ENCODE measurements at regions of chr10 and their contacts with region 1.

Region 1: DNA sequence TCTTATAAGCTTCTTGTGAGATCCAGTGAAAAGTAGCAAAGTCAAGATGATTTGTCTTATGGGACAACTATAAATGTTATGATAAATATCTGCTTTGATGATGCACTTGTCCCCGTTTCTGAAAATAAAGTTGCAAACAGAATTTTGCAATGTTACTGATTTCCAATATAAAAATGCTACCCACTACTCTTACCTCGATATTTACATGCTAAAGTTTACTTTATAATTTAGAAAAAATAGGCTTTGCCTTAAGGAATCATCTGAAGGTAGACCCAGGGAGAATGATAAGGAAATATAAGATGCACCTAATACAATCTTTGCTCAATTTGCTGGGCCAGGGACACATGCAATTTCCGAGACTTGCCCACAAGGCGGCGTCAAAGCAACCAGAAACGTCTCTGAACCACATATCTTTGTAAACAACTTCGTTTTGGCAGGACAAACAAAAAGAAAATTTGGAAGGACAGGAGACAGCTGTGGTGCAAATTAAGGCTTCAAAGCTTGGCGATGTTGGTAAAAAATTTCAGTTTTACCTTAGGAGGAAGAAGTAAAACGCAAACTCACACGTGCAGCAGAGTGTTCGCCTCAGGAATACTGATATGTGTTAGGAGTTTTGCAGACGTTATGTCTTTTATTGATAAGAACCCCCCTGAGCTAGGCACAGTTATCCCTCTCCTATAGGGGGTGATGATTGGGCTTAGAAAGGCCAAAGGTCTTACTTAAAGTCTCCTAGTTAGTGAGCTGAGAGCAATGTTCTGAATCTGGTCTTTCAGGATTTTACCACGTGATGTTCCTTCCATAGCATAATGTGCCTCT is 134.4 kb downstream of the PRKCQ start:
- DNase-seq: peak; percentile 41 to 50 (median 46)
- H3K4me3 ChIP-seq: no peak overlapping the region
- H3K4me3 Mint-ChIP-seq: peak overlapping the region in 2 of 8 donors; percentile 3 to 41
- H3K27ac ChIP-seq: no peak overlapping the region
- H3K27ac Mint-ChIP-seq: peak overlapping the region in 6 of 7 donors; percentile 24 to 73 (median 58)
- H3K4me1 ChIP-seq: peaks cover 5% of the 10 kb centered on the region
- H3K4me1 Mint-ChIP-seq: peaks cover 18 to 44% (median 30%) of the 10 kb centered on the region in 4 donors
- H3K27me3 ChIP-seq: no peaks in the 10 kb centered on the region
- H3K27me3 Mint-ChIP-seq: no peaks in the 10 kb centered on the region

Region 2: GRCh38 chr10:6416892-6417512 is 28.7 kb before region 1 on chr10:
- CTCF ChIA-PET with region 1: interaction called, 12 read pairs
- POLR2A ChIA-PET with region 1: no interaction called
- intact Hi-C with region 1: loop called (anchors 2 kb)
- DNase-seq: peak in 4 of 5 donors; percentile 52 to 57 (median 56)
- H3K4me3 ChIP-seq: no peak overlapping the region
- H3K4me3 Mint-ChIP-seq: no peak overlapping the region
- H3K27ac ChIP-seq: no peak overlapping the region
- H3K27ac Mint-ChIP-seq: no peak overlapping the region
- H3K4me1 ChIP-seq: no peaks in the 10 kb centered on the region
- H3K4me1 Mint-ChIP-seq: peaks cover 0 to 6% (median 2%) of the 10 kb centered on the region in 4 donors
- H3K27me3 ChIP-seq: no peaks in the 10 kb centered on the region
- H3K27me3 Mint-ChIP-seq: no peaks in the 10 kb centered on the region

Region 3: GRCh38 chr10:6542999-6543430 is 97.3 kb after region 1 on chr10:
- CTCF ChIA-PET with region 1: interaction called, 11 read pairs
- POLR2A ChIA-PET with region 1: no interaction called
- intact Hi-C with region 1: no loop called
- DNase-seq: peak; percentile 70 to 81 (median 78)
- H3K4me3 ChIP-seq: peak overlapping the region in 1 of 2 donors; percentile 30
- H3K4me3 Mint-ChIP-seq: peak overlapping the region; percentile 88 to 98 (median 93)
- H3K27ac ChIP-seq: peak overlapping the region; percentile 66
- H3K27ac Mint-ChIP-seq: peak overlapping the region; percentile 96 to 100 (median 99)
- H3K4me1 ChIP-seq: peaks cover 83% of the 10 kb centered on the region
- H3K4me1 Mint-ChIP-seq: peaks cover 67 to 86% (median 77%) of the 10 kb centered on the region in 4 donors
- H3K27me3 ChIP-seq: no peaks in the 10 kb centered on the region
- H3K27me3 Mint-ChIP-seq: no peaks in the 10 kb centered on the region

Region 4: GRCh38 chr10:6601246-6601805 is 155.6 kb after region 1 on chr10:
- CTCF ChIA-PET with region 1: interaction called, 9 read pairs
- POLR2A ChIA-PET with region 1: interaction called, 8 read pairs
- intact Hi-C with region 1: loop called (anchors 1 kb)
- DNase-seq: peak; percentile 47 to 55 (median 53)
- H3K4me3 ChIP-seq: no peak overlapping the region
- H3K4me3 Mint-ChIP-seq: peak overlapping the region in 7 of 8 donors; percentile 38 to 85 (median 77)
- H3K27ac ChIP-seq: no peak overlapping the region
- H3K27ac Mint-ChIP-seq: peak overlapping the region; percentile 63 to 92 (median 85)
- H3K4me1 ChIP-seq: peaks cover 67% of the 10 kb centered on the region
- H3K4me1 Mint-ChIP-seq: peaks cover 46 to 81% (median 63%) of the 10 kb centered on the region in 4 donors
- H3K27me3 ChIP-seq: no peaks in the 10 kb centered on the region
- H3K27me3 Mint-ChIP-seq: no peaks in the 10 kb centered on the region

Region 5: GRCh38 chr10:6647811-6648526 is 202.3 kb after region 1 on chr10:
- CTCF ChIA-PET with region 1: interaction called, 20 read pairs
- POLR2A ChIA-PET with region 1: interaction called, 3 read pairs
- intact Hi-C with region 1: loop called (anchors 1 kb)
- DNase-seq: peak; percentile 61 to 72 (median 65)
- H3K4me3 ChIP-seq: no peak overlapping the region
- H3K4me3 Mint-ChIP-seq: no peak overlapping the region
- H3K27ac ChIP-seq: no peak overlapping the region
- H3K27ac Mint-ChIP-seq: peak overlapping the region in 3 of 7 donors; percentile 4 to 75 (median 72)
- H3K4me1 ChIP-seq: peaks cover 23% of the 10 kb centered on the region
- H3K4me1 Mint-ChIP-seq: peaks cover 12 to 30% (median 17%) of the 10 kb centered on the region in 4 donors
- H3K27me3 ChIP-seq: no peaks in the 10 kb centered on the region
- H3K27me3 Mint-ChIP-seq: no peaks in the 10 kb centered on the region

Region 6: GRCh38 chr10:6678211-6678803 is 232.6 kb after region 1 on chr10:
- CTCF ChIA-PET with region 1: interaction called, 32 read pairs
- POLR2A ChIA-PET with region 1: no interaction called
- intact Hi-C with region 1: loop called (anchors 1 kb)
- DNase-seq: peak; percentile 53 to 59 (median 55)
- H3K4me3 ChIP-seq: no peak overlapping the region
- H3K4me3 Mint-ChIP-seq: no peak overlapping the region
- H3K27ac ChIP-seq: no peak overlapping the region
- H3K27ac Mint-ChIP-seq: peak overlapping the region in 1 of 7 donors; percentile 52
- H3K4me1 ChIP-seq: no peaks in the 10 kb centered on the region
- H3K4me1 Mint-ChIP-seq: peaks cover 0 to 6% (median 5%) of the 10 kb centered on the region in 4 donors
- H3K27me3 ChIP-seq: peaks cover 3% of the 10 kb centered on the region
- H3K27me3 Mint-ChIP-seq: peaks cover 4 to 9% of the 10 kb centered on the region in 2 donors